Activated CD4-positive, alpha-beta T cell treated with anti-CD3 and anti-CD28 coated beads, Interleukin-2, amount 10 ng/mL, durations not matched to agents 24 days and 14 days (primary cell): ENCODE measurements at regions of chr9 and their contacts with region 1.

Region 1: GRCh38 chr9:111759762-111760639 is 34.7 kb downstream of the SHOC1 start:
- DNase-seq: peak; percentile 87
- H3K4me3 Mint-ChIP-seq: no peak overlapping the region
- H3K27ac Mint-ChIP-seq: no peak overlapping the region
- H3K4me1 Mint-ChIP-seq: no peaks in the 10 kb centered on the region
- H3K27me3 Mint-ChIP-seq: no peaks in the 10 kb centered on the region

Region 2: DNA sequence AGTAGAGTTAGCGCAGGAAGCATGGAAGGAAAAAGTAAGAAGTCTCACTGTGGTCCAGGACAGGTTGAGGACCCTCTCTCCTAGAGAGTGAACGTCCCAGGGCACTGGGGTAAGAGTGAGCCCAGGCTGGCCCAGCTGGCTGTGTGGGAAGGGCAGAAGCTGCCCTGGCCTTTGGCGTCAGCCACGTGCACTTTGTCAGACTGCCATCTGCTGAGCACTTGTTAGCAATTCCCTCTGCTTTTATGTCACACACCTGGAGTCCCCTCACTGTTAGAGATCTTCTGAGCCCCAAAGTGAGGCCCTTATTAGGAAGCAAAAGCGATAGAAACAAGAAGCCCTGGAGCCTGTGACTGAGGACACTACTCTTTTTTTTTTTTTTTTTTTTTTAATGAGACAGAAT is 215.7 kb after region 1 on chr9:
- intact Hi-C with region 1: loop called (anchors 5 kb)
- DNase-seq: peak; percentile 63
- H3K4me3 Mint-ChIP-seq: no peak overlapping the region
- H3K27ac Mint-ChIP-seq: no peak overlapping the region
- H3K4me1 Mint-ChIP-seq: no peaks in the 10 kb centered on the region
- H3K27me3 Mint-ChIP-seq: peaks cover 17% of the 10 kb centered on the region